MCF 10A (cell line): ENCODE measurements at regions of chr3 and their contacts with region 1.

Region 1: GRCh38 chr3:57007513-57008460 is 52.7 kb upstream of the SPATA12 start:
- DNase-seq: peak; percentile 88
- H3K4me3 Mint-ChIP-seq: peak overlapping the region; percentile 46
- H3K27ac Mint-ChIP-seq: peak overlapping the region; percentile 88
- H3K4me1 Mint-ChIP-seq: peaks cover 19% of the 10 kb centered on the region
- H3K27me3 Mint-ChIP-seq: no peaks in the 10 kb centered on the region
- CTCF ChIP-seq: no peak

Region 2: DNA sequence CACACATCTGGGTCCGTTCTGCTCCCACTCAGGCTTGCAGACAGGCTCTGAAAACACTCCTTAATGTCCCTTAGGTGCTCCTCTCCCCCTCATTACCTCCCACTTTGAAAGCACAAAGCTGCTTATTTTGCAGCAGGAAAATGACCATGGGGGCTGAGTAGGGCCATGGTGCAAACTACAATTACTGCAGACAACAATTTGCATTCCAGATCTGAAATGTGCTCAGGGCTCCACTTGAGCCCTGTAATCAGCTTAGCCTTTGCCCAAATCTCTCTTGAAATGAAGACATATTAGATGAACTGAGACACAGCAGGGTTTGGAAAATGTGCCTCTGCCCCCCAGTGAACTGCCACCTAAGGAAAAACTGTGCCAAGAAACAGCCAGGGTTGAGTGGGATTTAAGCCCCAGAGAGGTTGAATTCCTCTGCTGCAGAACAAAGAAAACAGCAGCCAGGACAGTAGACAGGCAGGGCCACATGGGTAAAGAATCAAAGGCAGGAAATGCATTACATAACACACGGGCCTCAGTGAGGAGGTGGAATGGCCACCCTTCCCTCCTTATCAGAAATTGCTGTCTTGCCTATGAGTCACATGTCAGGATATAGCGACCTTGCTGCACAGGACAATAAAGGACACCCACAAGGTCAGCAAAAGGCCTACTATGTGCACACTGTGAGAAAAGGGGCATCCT is 79.3 kb before region 1 on chr3:
- CTCF ChIA-PET with region 1: no interaction called
- POLR2A ChIA-PET with region 1: no interaction called
- intact Hi-C with region 1: no loop called
- DNase-seq: peak; percentile 17
- H3K4me3 Mint-ChIP-seq: no peak overlapping the region
- H3K27ac Mint-ChIP-seq: no peak overlapping the region
- H3K4me1 Mint-ChIP-seq: peaks cover 17% of the 10 kb centered on the region
- H3K27me3 Mint-ChIP-seq: no peaks in the 10 kb centered on the region
- CTCF ChIP-seq: no peak

Region 3: DNA sequence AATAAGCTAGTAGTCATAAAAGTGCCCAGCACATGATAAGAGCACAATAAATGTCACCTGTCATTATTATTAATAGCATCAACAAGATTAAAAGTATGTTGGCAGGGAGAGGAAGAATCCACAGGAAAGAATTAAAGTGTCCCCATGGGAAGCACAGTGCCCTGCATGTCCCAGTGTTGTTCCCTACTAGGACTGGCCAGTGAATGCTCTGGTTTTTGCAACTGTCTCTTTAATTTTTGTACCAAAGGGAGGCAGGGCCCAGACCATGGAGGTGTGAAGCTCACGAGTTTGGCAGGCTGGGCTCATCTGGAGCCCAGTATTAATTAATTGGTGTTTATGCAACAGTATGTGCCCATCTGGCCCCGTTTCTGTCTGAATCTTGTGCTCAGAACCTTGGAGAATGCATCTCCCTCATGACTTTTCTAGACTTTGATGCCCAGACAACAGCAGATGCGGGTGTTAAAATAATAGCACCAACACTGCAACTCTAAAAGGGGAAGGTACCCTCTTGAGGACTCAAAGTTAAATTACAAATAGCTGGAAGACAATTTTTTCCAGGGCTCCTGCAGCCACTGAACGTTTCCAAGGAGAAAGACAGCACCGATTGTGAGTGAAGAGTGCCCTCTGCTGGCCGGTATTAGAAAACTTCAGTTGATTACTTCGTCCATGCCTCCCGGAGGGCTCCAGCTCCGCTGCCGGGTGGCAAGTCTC is 19.2 kb before region 1 on chr3:
- CTCF ChIA-PET with region 1: interaction called, 24 read pairs
- POLR2A ChIA-PET with region 1: no interaction called
- intact Hi-C with region 1: no loop called
- DNase-seq: peak; percentile 83
- H3K4me3 Mint-ChIP-seq: no peak overlapping the region
- H3K27ac Mint-ChIP-seq: no peak overlapping the region
- H3K4me1 Mint-ChIP-seq: no peaks in the 10 kb centered on the region
- H3K27me3 Mint-ChIP-seq: no peaks in the 10 kb centered on the region
- CTCF ChIP-seq: peak; percentile 81

Region 4: GRCh38 chr3:57060089-57060829 is 52.5 kb after region 1 on chr3 and contains the start of gene SPATA12:
- CTCF ChIA-PET with region 1: interaction called, 4 read pairs
- POLR2A ChIA-PET with region 1: interaction called, 15 read pairs
- intact Hi-C with region 1: loop called (anchors 2 kb)
- DNase-seq: peak; percentile 97
- H3K4me3 Mint-ChIP-seq: peak within 1 kb of the TSS; percentile 51
- H3K27ac Mint-ChIP-seq: peak within 1 kb of the TSS; percentile 73
- H3K4me1 Mint-ChIP-seq: peaks cover 30% of the 10 kb centered on the region
- H3K27me3 Mint-ChIP-seq: no peaks in the 10 kb centered on the region
- CTCF ChIP-seq: no peak
- total RNA-seq, gene SPATA12: 0.12 TPM in 1 of 2 replicates, not detected in the other

Region 5: GRCh38 chr3:57078344-57078634 is 70.5 kb after region 1 on chr3:
- CTCF ChIA-PET with region 1: interaction called, 4 read pairs
- POLR2A ChIA-PET with region 1: interaction called, 28 read pairs
- intact Hi-C with region 1: no loop called
- DNase-seq: no peak
- H3K4me3 Mint-ChIP-seq: peak overlapping the region; percentile 73
- H3K27ac Mint-ChIP-seq: no peak overlapping the region
- H3K4me1 Mint-ChIP-seq: peaks cover 5% of the 10 kb centered on the region
- H3K27me3 Mint-ChIP-seq: no peaks in the 10 kb centered on the region
- CTCF ChIP-seq: no peak

Region 6: GRCh38 chr3:57169872-57170623 is 162.3 kb after region 1 on chr3:
- CTCF ChIA-PET with region 1: interaction called, 3 read pairs
- POLR2A ChIA-PET with region 1: no interaction called
- intact Hi-C with region 1: loop called (anchors 5 kb)
- DNase-seq: peak; percentile 80
- H3K4me3 Mint-ChIP-seq: peak overlapping the region; percentile 52
- H3K27ac Mint-ChIP-seq: no peak overlapping the region
- H3K4me1 Mint-ChIP-seq: peaks cover 7% of the 10 kb centered on the region
- H3K27me3 Mint-ChIP-seq: peaks cover 16% of the 10 kb centered on the region
- CTCF ChIP-seq: peak; percentile 81

Region 7: DNA sequence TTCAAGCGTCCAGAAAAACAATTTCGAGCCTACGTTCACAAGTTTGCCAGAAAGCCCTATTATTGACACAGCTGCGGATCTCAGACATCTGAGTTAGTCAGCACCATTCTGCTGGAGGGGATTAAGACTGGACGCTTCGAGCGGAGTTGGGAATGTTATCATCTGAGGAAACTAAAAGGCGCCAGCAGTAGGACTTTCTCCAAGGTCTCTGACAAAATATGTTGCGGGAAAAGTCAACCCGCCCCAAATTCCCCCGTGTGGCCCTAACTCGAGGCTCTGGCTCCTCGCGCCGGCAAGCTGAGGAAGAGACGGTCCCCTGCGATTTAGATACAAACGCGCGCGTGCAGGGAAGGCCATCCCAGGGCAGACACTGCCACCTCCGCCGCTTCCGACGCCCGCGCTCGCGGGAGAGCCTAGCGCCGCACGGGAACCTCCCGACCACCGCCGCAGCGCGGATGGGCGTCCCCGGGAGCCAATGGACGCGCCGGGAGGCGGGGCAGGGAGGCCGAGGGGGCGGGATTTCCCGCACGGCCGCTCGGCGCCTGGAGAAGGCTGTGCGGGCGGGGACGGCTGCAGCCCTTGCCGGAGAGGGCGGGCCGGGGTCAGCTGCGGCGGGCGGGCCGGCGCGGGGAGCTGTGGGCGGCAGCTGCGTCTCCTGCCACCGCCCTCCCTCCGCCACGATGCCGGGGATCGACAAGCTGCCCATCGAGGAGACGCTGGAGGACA is 219.6 kb after region 1 on chr3 and contains the start of gene APPL1:
- CTCF ChIA-PET with region 1: interaction called, 6 read pairs
- POLR2A ChIA-PET with region 1: interaction called, 13 read pairs
- intact Hi-C with region 1: loop called (anchors 5 kb)
- DNase-seq: peak; percentile 90
- H3K4me3 Mint-ChIP-seq: peak within 1 kb of the TSS; percentile 84
- H3K27ac Mint-ChIP-seq: peak within 1 kb of the TSS; percentile 75
- H3K4me1 Mint-ChIP-seq: peaks cover 11% of the 10 kb centered on the region
- H3K27me3 Mint-ChIP-seq: no peaks in the 10 kb centered on the region
- CTCF ChIP-seq: peak; percentile 5
- total RNA-seq, gene APPL1: 26.4 and 35.4 TPM in 2 replicates